ENCODE measurements at regions of chr7 and their contacts with region 1.

Region 1: GRCh38 chr7:90424720-90425119 is 21.5 kb downstream of the CLDN12 start:
- DNase-seq: no peak
- ATAC-seq: no peak
- H3K4me3 ChIP-seq: no peak overlapping the region
- H3K27ac ChIP-seq: no peak overlapping the region
- H3K4me1 ChIP-seq: peaks cover 0 to 11% (median 0%) of the 10 kb centered on the region in 12 donors
- H3K27me3 ChIP-seq: no peaks in the 10 kb centered on the region
- CTCF ChIP-seq: no peak
- POLR2A ChIP-seq: no peak

Region 2: DNA sequence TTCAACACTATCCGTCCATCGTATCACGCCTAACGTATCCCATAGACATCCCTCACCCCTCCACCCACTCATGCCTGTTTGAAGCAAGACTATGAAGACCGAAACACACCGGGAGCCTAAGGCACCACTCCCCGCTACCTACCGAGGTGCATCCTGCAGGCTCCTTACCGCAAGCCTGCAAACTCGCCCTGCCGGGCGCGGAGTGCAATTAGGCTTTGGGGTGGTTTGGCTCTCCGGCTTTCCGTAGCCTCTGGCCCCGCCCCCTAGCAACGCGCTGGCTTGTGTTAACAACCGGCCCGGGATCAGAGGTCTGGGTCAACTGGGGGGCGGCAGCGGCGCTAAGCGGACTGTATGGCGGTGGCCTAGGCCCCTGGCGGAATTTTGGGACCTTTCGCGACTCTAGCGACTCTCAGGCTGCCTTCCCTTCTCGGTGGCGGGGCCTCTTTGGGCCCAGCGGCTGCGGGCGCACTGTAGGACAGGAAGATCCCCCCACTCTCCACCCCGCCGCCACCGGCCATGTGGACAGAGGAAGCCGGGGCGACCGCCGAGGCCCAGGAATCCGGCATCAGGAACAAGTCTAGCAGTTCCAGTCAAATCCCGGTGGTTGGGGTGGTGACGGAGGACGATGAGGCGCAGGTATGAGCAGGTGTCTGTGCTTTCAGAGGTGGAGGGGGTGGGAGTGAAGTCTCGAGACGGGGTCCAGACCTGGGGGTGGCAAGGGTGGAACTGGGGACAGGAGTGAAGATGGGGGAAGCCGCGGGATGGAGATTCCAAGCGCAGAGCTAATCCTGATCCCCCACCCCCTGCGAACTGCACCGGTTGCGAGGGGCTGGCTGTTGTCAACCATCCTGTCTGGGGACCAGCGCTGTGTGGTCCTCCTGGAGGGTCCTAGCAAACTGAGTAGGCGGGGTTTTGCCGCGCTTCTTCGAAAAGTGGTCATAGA is 179.5 kb before region 1 on chr7 and contains the start of gene CFAP69:
- intact Hi-C with region 1: loop called in 1 of 10 experiments (anchors 10 kb)
- DNase-seq: peak; percentile 90 to 93 (median 91)
- ATAC-seq: peak; percentile 89 to 99 (median 98)
- H3K4me3 ChIP-seq: peak within 1 kb of the TSS; percentile 72 to 97 (median 86)
- H3K27ac ChIP-seq: peak within 1 kb of the TSS in 6 of 12 donors; percentile 22 to 75 (median 38)
- H3K4me1 ChIP-seq: peaks cover 0 to 19% (median 13%) of the 10 kb centered on the region in 12 donors
- H3K27me3 ChIP-seq: peaks cover 0 to 9% (median 0%) of the 10 kb centered on the region in 9 donors
- CTCF ChIP-seq: peak in 6 of 12 donors; percentile 21 to 35 (median 27)
- POLR2A ChIP-seq: no peak
- total RNA-seq, gene CFAP69: 1.3 to 4.5 (median 2.7) TPM

Region 3: GRCh38 chr7:90262438-90262837 is 162.3 kb before region 1 on chr7:
- intact Hi-C with region 1: loop called in 2 of 10 experiments (anchors 10 kb)
- DNase-seq: no peak
- ATAC-seq: peak in 1 of 4 donors; percentile 66
- H3K4me3 ChIP-seq: no peak overlapping the region
- H3K27ac ChIP-seq: no peak overlapping the region
- H3K4me1 ChIP-seq: no peaks in the 10 kb centered on the region
- H3K27me3 ChIP-seq: no peaks in the 10 kb centered on the region
- CTCF ChIP-seq: peak in 11 of 12 donors; percentile 26 to 61 (median 40)
- POLR2A ChIP-seq: no peak

Region 4: GRCh38 chr7:90298145-90299038 is 126.3 kb before region 1 on chr7:
- intact Hi-C with region 1: loop called in 1 of 10 experiments (anchors 10 kb)
- DNase-seq: no peak
- ATAC-seq: peak in 3 of 4 donors; percentile 55 to 77 (median 75)
- H3K4me3 ChIP-seq: no peak overlapping the region
- H3K27ac ChIP-seq: no peak overlapping the region
- H3K4me1 ChIP-seq: peaks cover 0 to 4% (median 0%) of the 10 kb centered on the region in 12 donors
- H3K27me3 ChIP-seq: no peaks in the 10 kb centered on the region
- CTCF ChIP-seq: peak; percentile 8 to 63 (median 38)
- POLR2A ChIP-seq: no peak

Region 5: DNA sequence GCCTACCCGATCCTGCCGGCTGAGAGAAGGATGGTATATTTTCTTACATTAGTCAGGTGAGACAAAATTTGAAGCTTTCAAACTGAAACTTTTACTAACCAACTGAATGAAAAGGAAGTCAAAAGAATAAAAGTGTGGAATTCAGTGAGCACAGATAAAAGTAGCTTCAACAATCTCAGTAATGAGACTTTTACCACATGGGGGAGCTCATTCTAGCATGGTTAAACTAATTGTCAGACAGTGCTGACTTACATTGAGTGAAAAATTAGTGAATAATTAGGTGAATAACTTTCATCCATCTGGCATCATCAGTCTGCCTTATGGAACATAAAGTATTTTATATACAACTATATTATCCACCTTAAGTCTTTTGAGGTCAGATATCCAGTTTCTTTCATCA is 112.0 kb before region 1 on chr7:
- intact Hi-C with region 1: loop called in 5 of 10 experiments (anchors 5 to 10 kb)
- DNase-seq: no peak
- ATAC-seq: no peak
- H3K4me3 ChIP-seq: no peak overlapping the region
- H3K27ac ChIP-seq: no peak overlapping the region
- H3K4me1 ChIP-seq: no peaks in the 10 kb centered on the region
- H3K27me3 ChIP-seq: peaks cover 0 to 10% (median 0%) of the 10 kb centered on the region in 9 donors
- CTCF ChIP-seq: peak in 6 of 12 donors; percentile 6 to 37 (median 23)
- POLR2A ChIP-seq: no peak

Measured in heart left ventricle (tissue), 16 donors.